IMR-90 (cell line): ENCODE measurements at regions of chr6 and their contacts with region 1.

Region 1: DNA sequence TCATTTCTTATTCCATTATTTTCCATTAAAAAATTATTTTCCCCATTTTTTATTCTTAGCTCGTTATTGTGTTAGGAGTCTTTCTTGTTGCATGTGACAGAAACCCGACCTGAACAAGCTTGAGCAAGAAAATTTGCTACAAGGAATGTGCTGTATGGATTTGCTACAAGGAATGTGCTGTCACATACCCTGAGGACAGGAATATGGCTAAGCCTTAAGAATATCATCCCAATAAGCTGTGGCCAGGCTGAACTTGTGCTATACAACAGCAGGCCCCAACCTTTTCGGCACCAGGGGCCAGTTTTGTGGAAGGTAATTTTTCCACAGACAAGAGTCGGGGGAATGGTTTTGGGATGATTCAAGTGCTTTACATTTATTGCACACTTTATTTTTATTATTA is 114.0 kb downstream of the TRMT11 start:
- DNase-seq: no peak
- ATAC-seq: no peak
- H3K4me3 ChIP-seq: no peak overlapping the region
- H3K27ac ChIP-seq: no peak overlapping the region
- H3K4me1 ChIP-seq: no peaks in the 10 kb centered on the region
- H3K27me3 ChIP-seq: no peaks in the 10 kb centered on the region
- CTCF ChIP-seq: no peak
- POLR2A ChIP-seq: no peak
- RAD21 ChIP-seq: no peak

Region 2: DNA sequence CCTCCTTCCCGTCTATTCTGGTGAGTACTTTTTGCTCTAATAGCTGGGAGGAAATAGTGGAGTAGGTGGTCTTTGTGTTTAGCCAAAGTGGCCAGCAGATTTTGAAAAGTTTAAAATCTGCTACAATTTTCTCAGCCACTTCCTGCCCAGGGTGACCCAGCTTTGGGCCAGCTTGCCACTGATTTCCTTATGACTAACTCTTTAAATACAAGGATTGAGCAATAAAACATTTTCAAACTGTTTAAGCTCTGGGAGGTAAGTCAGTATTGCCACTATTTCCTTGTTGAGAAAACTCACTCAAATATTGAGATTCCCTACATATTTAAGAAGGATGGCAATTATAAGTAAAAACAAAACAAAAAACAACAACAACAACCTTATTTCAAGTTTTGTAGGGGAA is 59.6 kb before region 1 on chr6:
- CTCF ChIA-PET with region 1: no interaction called
- POLR2A ChIA-PET with region 1: no interaction called
- dilution Hi-C with region 1: no loop called
- in situ Hi-C with region 1: no loop called
- intact Hi-C with region 1: no loop called
- DNase-seq: peak; percentile 78
- ATAC-seq: peak; percentile 83
- H3K4me3 ChIP-seq: no peak overlapping the region
- H3K27ac ChIP-seq: no peak overlapping the region
- H3K4me1 ChIP-seq: peaks cover 8% of the 10 kb centered on the region; the same call in 1 of the 2 replicates
- H3K27me3 ChIP-seq: no peaks in the 10 kb centered on the region
- CTCF ChIP-seq: no peak
- POLR2A ChIP-seq: no peak
- RAD21 ChIP-seq: no peak

Region 3: GRCh38 chr6:126143761-126144251 is 43.4 kb after region 1 on chr6:
- CTCF ChIA-PET with region 1: no interaction called
- POLR2A ChIA-PET with region 1: interaction called, 3 read pairs
- dilution Hi-C with region 1: no loop called
- in situ Hi-C with region 1: no loop called
- intact Hi-C with region 1: loop called (anchors 5 kb)
- DNase-seq: no peak
- ATAC-seq: no peak
- H3K4me3 ChIP-seq: no peak overlapping the region
- H3K27ac ChIP-seq: no peak overlapping the region
- H3K4me1 ChIP-seq: no peaks in the 10 kb centered on the region
- H3K27me3 ChIP-seq: no peaks in the 10 kb centered on the region
- CTCF ChIP-seq: no peak
- POLR2A ChIP-seq: no peak
- RAD21 ChIP-seq: no peak